IMR-90 (cell line): ENCODE measurements at regions of chr4 and their contacts with region 1.

Region 1: DNA sequence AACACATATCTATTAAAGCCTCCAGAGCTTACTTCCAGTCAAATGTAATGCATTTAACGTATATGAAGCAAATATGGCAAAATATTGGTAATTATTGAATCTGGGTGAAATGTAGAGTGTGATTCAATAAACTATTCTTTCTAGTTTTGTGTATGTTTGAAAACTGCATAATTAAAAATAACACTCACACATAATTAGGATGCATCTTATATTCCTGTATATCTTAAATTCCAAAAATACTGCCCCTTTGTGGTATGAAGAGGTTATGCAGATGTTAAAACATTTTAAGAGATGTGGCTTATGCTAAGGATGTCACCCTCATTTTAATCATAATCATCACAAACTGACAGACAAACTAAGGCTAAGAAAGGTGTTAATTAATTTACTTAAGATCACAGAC is 182.9 kb downstream of the COX18 start:
- DNase-seq: no peak
- ATAC-seq: 0 out of 2 replicates have a peak, but pooled peaks have one; percentile 40
- H3K4me3 ChIP-seq: no peak overlapping the region
- H3K27ac ChIP-seq: no peak overlapping the region
- H3K4me1 ChIP-seq: no peaks in the 10 kb centered on the region
- H3K27me3 ChIP-seq: no peaks in the 10 kb centered on the region
- CTCF ChIP-seq: peak; percentile 39
- POLR2A ChIP-seq: no peak
- RAD21 ChIP-seq: no peak

Region 2: GRCh38 chr4:73011651-73012030 is 125.0 kb after region 1 on chr4:
- CTCF ChIA-PET with region 1: no interaction called
- POLR2A ChIA-PET with region 1: no interaction called
- dilution Hi-C with region 1: no loop called
- in situ Hi-C with region 1: no loop called
- intact Hi-C with region 1: loop called (anchors 2 kb)
- DNase-seq: no peak
- ATAC-seq: no peak
- H3K4me3 ChIP-seq: no peak overlapping the region
- H3K27ac ChIP-seq: no peak overlapping the region
- H3K4me1 ChIP-seq: no peaks in the 10 kb centered on the region
- H3K27me3 ChIP-seq: no peaks in the 10 kb centered on the region; the same call in 1 of the 2 replicates
- CTCF ChIP-seq: no peak
- POLR2A ChIP-seq: no peak
- RAD21 ChIP-seq: no peak